Mammary epithelial cell (primary cell): ENCODE measurements at regions of chr17 and their contacts with region 1.

Region 1: GRCh38 chr17:56499799-56500388 is 93.6 kb upstream of the NOG start:
- DNase-seq: peak; percentile 23
- H3K4me3 ChIP-seq: no peak overlapping the region
- H3K27ac ChIP-seq: no peak overlapping the region
- H3K4me1 ChIP-seq: no peaks in the 10 kb centered on the region
- H3K27me3 ChIP-seq: no peaks in the 10 kb centered on the region
- CTCF ChIP-seq: peak; percentile 54 to 55

Region 2: DNA sequence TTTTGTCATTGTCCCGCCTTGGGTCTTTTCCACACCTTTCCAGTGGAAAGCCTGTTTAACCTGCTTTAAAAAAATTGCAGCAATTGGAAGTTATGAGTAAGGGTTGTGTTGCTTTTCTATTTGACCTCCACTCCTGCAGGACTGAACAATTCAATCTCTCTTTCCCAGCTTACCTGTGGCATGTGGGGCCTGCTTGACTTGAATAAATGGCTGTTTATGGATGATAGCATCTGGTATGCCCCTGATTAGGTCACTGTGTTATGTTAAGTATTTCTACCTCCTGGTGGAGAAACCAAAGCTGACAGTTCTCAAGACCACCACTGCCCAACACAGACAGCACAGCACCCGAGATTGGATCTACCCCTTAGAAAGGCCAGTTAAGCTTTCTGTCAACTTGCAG is 28.8 kb after region 1 on chr17:
- CTCF ChIA-PET with region 1: no interaction called
- dilution Hi-C with region 1: no loop called
- in situ Hi-C with region 1: no loop called
- intact Hi-C with region 1: no loop called
- DNase-seq: no peak
- H3K4me3 ChIP-seq: no peak overlapping the region
- H3K27ac ChIP-seq: no peak overlapping the region
- H3K4me1 ChIP-seq: no peaks in the 10 kb centered on the region
- H3K27me3 ChIP-seq: no peaks in the 10 kb centered on the region
- CTCF ChIP-seq: no peak

Region 3: GRCh38 chr17:56723421-56723820 is 223.5 kb after region 1 on chr17:
- CTCF ChIA-PET with region 1: no interaction called
- dilution Hi-C with region 1: loop called (anchors 5 kb)
- in situ Hi-C with region 1: no loop called
- intact Hi-C with region 1: no loop called
- DNase-seq: no peak
- H3K4me3 ChIP-seq: no peak overlapping the region
- H3K27ac ChIP-seq: no peak overlapping the region
- H3K4me1 ChIP-seq: peaks cover 5% of the 10 kb centered on the region
- H3K27me3 ChIP-seq: no peaks in the 10 kb centered on the region
- CTCF ChIP-seq: no peak

Region 4: DNA sequence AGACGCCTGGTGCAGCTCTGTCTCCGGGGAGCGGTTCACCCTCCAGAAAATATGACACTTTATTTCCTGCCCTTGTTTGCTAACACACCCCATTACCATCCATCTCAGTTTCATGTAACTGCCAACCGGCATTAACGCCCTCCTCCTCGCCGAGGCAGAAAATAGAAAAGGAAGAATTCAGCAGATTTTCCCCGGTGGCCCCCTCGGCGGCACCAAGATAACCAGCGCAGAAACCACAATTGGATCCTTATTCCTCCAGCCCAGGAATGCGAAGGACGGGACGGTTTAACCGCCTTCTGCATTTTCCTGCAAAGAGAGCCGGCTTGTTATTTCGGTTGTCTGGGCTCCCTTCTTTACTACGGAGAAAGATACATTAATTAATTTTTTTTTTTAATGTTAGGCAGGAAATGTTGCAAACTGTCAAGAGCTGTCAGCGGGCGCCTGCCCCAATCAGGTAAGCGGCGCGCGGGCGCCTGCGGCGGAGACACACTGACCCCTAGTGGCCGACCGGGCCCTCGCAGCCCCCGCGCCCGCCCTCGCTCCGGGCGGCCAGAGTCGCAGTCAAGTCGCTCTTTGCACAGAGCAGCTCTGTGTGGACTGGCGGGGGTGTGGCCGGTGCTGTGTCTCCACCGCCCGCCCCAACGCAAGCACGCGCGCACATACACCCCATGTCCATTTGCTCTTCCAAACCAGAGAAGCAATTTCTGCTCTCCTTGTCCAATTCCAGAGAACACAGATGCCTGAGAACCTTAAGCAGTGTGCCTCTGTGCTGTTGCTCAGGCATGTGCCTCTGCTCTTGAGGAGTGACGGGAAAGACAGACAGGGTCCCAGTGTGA is 280.2 kb after region 1 on chr17:
- CTCF ChIA-PET with region 1: interaction called, 18 read pairs
- dilution Hi-C with region 1: no loop called
- in situ Hi-C with region 1: no loop called
- intact Hi-C with region 1: loop called (anchors 1 kb)
- DNase-seq: peak; percentile 78
- H3K4me3 ChIP-seq: peak overlapping the region in 2 of 3 experiments; percentile 32 to 35
- H3K27ac ChIP-seq: no peak overlapping the region
- H3K4me1 ChIP-seq: peaks cover 20% of the 10 kb centered on the region
- H3K27me3 ChIP-seq: no peaks in the 10 kb centered on the region
- CTCF ChIP-seq: peak; percentile 78 to 96

Region 5: GRCh38 chr17:56786989-56787482 is 287.1 kb after region 1 on chr17:
- CTCF ChIA-PET with region 1: interaction called, 10 read pairs
- dilution Hi-C with region 1: no loop called
- in situ Hi-C with region 1: no loop called
- intact Hi-C with region 1: no loop called
- DNase-seq: peak; percentile 99
- H3K4me3 ChIP-seq: no peak overlapping the region
- H3K27ac ChIP-seq: peak overlapping the region; percentile 79
- H3K4me1 ChIP-seq: peaks cover 36% of the 10 kb centered on the region
- H3K27me3 ChIP-seq: no peaks in the 10 kb centered on the region
- CTCF ChIP-seq: no peak

Region 6: DNA sequence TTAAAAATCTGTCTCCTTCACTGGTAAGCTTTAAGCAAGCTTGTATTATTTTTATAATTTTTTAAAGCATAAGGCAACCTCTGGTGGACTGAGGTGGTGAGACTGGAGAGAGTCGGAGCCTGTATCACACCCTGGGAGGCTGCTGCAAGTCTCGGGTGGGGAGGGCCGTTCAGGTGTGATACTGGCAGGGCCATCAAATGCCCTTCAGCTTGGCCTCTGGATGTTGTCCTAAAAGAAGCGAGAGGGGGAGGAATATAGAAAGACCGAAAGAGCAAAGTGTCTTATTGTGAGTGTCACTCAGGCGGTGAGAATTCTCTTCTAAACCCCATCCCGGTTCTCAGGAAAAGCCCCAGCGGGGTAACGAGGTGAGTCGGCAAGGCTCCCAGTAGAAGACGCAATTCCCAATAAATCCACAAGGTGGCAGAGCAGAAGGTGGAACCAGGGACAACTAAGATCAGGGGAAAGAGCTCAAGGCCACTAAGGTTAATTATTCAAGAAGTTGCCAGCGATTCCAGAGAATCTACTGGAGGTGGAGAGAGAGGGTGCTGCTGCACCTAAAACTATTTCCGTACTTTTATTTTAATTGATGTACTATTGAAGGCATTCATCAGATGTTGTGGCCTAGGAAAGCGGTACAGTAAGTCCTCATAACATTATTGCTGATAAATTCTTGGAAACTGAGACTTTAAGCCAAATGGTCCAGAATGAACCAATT is 319.7 kb after region 1 on chr17:
- CTCF ChIA-PET with region 1: no interaction called
- dilution Hi-C with region 1: no loop called
- in situ Hi-C with region 1: no loop called
- intact Hi-C with region 1: loop called (anchors 1 kb)
- DNase-seq: peak; percentile 74
- H3K4me3 ChIP-seq: no peak overlapping the region
- H3K27ac ChIP-seq: no peak overlapping the region
- H3K4me1 ChIP-seq: no peaks in the 10 kb centered on the region
- H3K27me3 ChIP-seq: no peaks in the 10 kb centered on the region
- CTCF ChIP-seq: peak; percentile 72 to 77